Uterus (tissue), 4 donors: ENCODE measurements at regions of chr3 and their contacts with region 1.

Region 1: DNA sequence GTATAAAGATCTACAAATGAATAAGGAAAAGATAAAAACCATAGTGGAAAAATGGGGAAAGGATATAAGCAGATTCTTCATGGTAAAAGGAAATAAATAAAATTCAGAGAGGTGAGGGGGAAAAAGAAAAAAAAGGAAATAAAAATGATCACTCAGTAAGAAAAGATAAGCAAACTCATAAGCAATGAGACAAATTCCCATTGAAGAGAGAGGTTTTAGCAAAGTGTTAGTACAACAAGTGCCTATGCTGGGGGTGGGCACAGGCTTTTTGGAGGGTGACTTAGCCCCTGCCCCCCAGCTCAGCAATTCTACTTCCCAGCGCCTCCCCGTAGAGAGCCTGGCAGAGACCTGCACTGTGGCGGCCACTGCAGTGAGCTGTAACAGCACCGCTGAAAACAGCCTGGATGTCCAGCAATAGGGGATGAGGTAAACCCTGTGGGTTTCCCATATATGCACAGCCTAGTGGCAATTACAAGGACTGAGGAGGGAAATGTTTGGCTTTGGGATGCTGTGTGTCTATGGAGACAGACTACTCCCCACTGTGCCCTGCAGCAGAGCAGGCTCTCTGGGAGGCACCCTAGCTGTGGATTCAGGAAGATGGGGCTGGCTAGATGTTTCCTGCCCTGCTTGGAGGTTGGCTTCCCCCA is 23.7 kb upstream of the SFMBT1 start:
- DNase-seq: no peak
- H3K4me3 ChIP-seq: no peak overlapping the region
- H3K27ac ChIP-seq: no peak overlapping the region
- H3K4me1 ChIP-seq: no peaks in the 10 kb centered on the region
- H3K27me3 ChIP-seq: no peaks in the 10 kb centered on the region
- CTCF ChIP-seq: no peak
- POLR2A ChIP-seq: no peak

Region 2: GRCh38 chr3:53024315-53024714 is 45.2 kb before region 1 on chr3:
- intact Hi-C with region 1: loop called (anchors 2 kb)
- DNase-seq: no peak
- H3K4me3 ChIP-seq: no peak overlapping the region
- H3K27ac ChIP-seq: no peak overlapping the region
- H3K4me1 ChIP-seq: no peaks in the 10 kb centered on the region
- H3K27me3 ChIP-seq: no peaks in the 10 kb centered on the region
- CTCF ChIP-seq: no peak
- POLR2A ChIP-seq: no peak

Region 3: GRCh38 chr3:53130179-53131061 is 60.9 kb after region 1 on chr3 and contains the start of gene RFT1:
- intact Hi-C with region 1: no loop called
- DNase-seq: peak; percentile 97 to 98
- H3K4me3 ChIP-seq: peak within 1 kb of the TSS; percentile 80 to 99
- H3K27ac ChIP-seq: peak within 1 kb of the TSS; percentile 86 to 90
- H3K4me1 ChIP-seq: peaks cover 0 to 8% of the 10 kb centered on the region in 2 donors
- H3K27me3 ChIP-seq: no peaks in the 10 kb centered on the region
- CTCF ChIP-seq: peak in 2 of 4 experiments; percentile 30 to 41
- POLR2A ChIP-seq: peak; percentile 35 to 68
- total RNA-seq, gene RFT1: 13.1 to 38.2 (median 16.5) TPM